ENCODE measurements at regions of chr11 and their contacts with region 1.

Region 1: GRCh38 chr11:44927174-44927661 is 23.5 kb downstream of the TP53I11 start:
- DNase-seq: peak; percentile 73
- CTCF ChIP-seq: peak; percentile 76

Region 2: DNA sequence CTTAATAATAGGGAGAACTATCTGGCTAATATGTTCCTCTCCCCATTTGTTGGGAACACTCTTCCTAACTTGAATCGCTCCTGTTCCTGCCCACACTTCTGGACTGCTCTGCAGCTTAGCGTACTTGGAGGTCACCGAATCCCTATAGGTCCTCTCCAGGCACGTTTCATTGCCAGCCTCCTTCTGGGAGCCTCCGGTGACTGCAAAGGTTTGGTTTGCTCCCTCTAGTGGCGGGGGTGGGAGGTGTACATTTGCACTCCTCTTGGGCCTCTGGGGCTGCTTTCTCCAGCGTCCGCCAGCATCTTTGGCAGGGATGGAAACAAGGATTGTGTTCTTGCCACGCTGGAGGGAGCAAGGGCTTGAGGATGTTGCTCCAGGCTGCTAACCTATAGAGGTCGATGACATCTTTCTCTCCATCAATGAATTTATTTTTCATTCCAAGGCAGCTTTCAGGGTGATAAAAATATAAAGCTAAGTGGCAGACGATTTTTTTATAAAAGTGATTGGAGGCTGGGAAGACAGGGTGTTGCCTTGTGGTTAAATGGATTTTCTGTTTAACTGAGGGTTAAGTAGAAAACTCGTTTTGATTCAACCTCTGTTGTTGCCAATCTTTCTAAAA is 151.7 kb before region 1 on chr11:
- CTCF ChIA-PET with region 1: no interaction called
- POLR2A ChIA-PET with region 1: no interaction called
- DNase-seq: peak; percentile 69
- CTCF ChIP-seq: peak; percentile 65

Region 3: GRCh38 chr11:44817207-44817949 is 109.8 kb before region 1 on chr11:
- CTCF ChIA-PET with region 1: no interaction called
- POLR2A ChIA-PET with region 1: no interaction called
- DNase-seq: no peak
- CTCF ChIP-seq: no peak

Region 4: GRCh38 chr11:44946263-44946662 is 19.0 kb after region 1 on chr11:
- CTCF ChIA-PET with region 1: interaction called, 92 read pairs
- POLR2A ChIA-PET with region 1: no interaction called
- DNase-seq: no peak
- CTCF ChIP-seq: no peak

Region 5: GRCh38 chr11:44977476-44977984 is 50.3 kb after region 1 on chr11:
- CTCF ChIA-PET with region 1: no interaction called
- POLR2A ChIA-PET with region 1: no interaction called
- DNase-seq: no peak
- CTCF ChIP-seq: no peak

Region 6: GRCh38 chr11:45713573-45713972 is 786.4 kb after region 1 on chr11:
- CTCF ChIA-PET with region 1: no interaction called
- POLR2A ChIA-PET with region 1: no interaction called
- DNase-seq: no peak
- CTCF ChIP-seq: no peak

Measured in GM10248 (cell line).